CD4-positive, alpha-beta memory T cell (primary cell): ENCODE measurements at regions of chr12 and their contacts with region 1.

Region 1: DNA sequence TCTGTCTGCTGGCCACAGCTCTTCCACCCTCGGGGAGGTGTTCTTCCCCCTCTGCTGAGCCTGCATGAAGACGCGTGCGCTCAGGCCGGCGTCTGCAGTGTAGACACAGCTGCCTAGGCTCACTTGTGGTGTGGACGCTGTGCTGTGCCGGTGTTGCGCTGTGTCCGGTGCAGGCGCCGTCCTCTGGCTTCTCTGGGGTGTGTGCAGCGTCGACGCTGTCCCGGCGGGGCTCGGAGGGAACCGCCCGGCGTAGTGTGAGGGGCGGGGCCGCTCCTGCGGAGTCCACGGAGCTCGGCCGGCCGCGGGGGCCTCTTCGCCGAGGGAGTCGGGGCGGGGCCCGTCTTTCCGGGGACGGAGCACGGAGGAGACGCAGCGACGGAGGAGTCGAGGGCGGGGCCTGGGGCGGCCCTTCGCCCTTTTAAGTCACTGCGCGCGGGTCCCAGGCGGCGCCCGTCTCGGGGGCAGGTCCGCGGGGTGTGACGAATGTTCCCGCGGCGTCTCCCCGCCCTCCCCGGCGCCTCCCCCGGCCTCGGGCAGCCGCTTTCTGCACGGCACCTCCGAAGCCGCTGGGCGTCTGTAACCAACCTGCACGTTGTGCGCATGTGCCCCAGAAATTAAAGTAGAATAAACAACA is 45.2 kb downstream of the NOC4L start:
- DNase-seq: peak; percentile 93 to 95 (median 95)
- H3K4me3 ChIP-seq: peak overlapping the region; percentile 52 to 76
- H3K4me3 Mint-ChIP-seq: peak overlapping the region; percentile 89 to 98 (median 96)
- H3K27ac ChIP-seq: peak overlapping the region; percentile 74
- H3K27ac Mint-ChIP-seq: peak overlapping the region; percentile 88 to 99 (median 97)
- H3K4me1 ChIP-seq: peaks cover 49% of the 10 kb centered on the region
- H3K4me1 Mint-ChIP-seq: peaks cover 21 to 65% (median 39%) of the 10 kb centered on the region in 4 donors
- H3K27me3 ChIP-seq: no peaks in the 10 kb centered on the region
- H3K27me3 Mint-ChIP-seq: no peaks in the 10 kb centered on the region

Region 2: GRCh38 chr12:132083941-132084620 is 105.4 kb before region 1 on chr12:
- CTCF ChIA-PET with region 1: no interaction called
- POLR2A ChIA-PET with region 1: no interaction called
- intact Hi-C with region 1: loop called (anchors 1 kb)
- DNase-seq: peak; percentile 85 to 87 (median 87)
- H3K4me3 ChIP-seq: peak overlapping the region; percentile 42 to 66
- H3K4me3 Mint-ChIP-seq: peak overlapping the region; percentile 82 to 94 (median 91)
- H3K27ac ChIP-seq: peak overlapping the region; percentile 71
- H3K27ac Mint-ChIP-seq: peak overlapping the region; percentile 79 to 94 (median 91)
- H3K4me1 ChIP-seq: peaks cover 19% of the 10 kb centered on the region
- H3K4me1 Mint-ChIP-seq: peaks cover 22 to 33% (median 28%) of the 10 kb centered on the region in 4 donors
- H3K27me3 ChIP-seq: no peaks in the 10 kb centered on the region
- H3K27me3 Mint-ChIP-seq: no peaks in the 10 kb centered on the region

Region 3: GRCh38 chr12:132144115-132144812 is 45.2 kb before region 1 on chr12 and contains the starts of genes DDX51 and NOC4L:
- CTCF ChIA-PET with region 1: interaction called, 4 read pairs
- POLR2A ChIA-PET with region 1: interaction called, 9 read pairs
- intact Hi-C with region 1: loop called (anchors 1 kb)
- DNase-seq: peak; percentile 92 to 97 (median 95)
- H3K4me3 ChIP-seq: peak within 1 kb of the TSS; percentile 58 to 81
- H3K4me3 Mint-ChIP-seq: peak within 1 kb of the TSS; percentile 89 to 99 (median 90)
- H3K27ac ChIP-seq: peak within 1 kb of the TSS; percentile 82
- H3K27ac Mint-ChIP-seq: peak within 1 kb of the TSS; percentile 94 to 99 (median 97)
- H3K4me1 ChIP-seq: peaks cover 27% of the 10 kb centered on the region
- H3K4me1 Mint-ChIP-seq: peaks cover 15 to 42% (median 27%) of the 10 kb centered on the region in 4 donors
- H3K27me3 ChIP-seq: no peaks in the 10 kb centered on the region
- H3K27me3 Mint-ChIP-seq: peaks cover 0 to 2% of the 10 kb centered on the region in 2 donors
- total RNA-seq, gene DDX51: 42.1 to 42.9 TPM
- total RNA-seq, gene NOC4L: 17.0 to 18.5 TPM

Region 4: GRCh38 chr12:132153501-132154340 is 35.8 kb before region 1 on chr12:
- CTCF ChIA-PET with region 1: interaction called, 14 read pairs
- POLR2A ChIA-PET with region 1: interaction called, 9 read pairs
- intact Hi-C with region 1: no loop called
- DNase-seq: peak; percentile 74 to 78 (median 75)
- H3K4me3 ChIP-seq: peak overlapping the region; percentile 23 to 30
- H3K4me3 Mint-ChIP-seq: peak overlapping the region in 3 of 8 donors; percentile 8 to 48 (median 39)
- H3K27ac ChIP-seq: no peak overlapping the region
- H3K27ac Mint-ChIP-seq: peak overlapping the region in 2 of 7 donors; percentile 15 to 64
- H3K4me1 ChIP-seq: peaks cover 10% of the 10 kb centered on the region
- H3K4me1 Mint-ChIP-seq: peaks cover 0 to 5% (median 0%) of the 10 kb centered on the region in 4 donors
- H3K27me3 ChIP-seq: no peaks in the 10 kb centered on the region
- H3K27me3 Mint-ChIP-seq: no peaks in the 10 kb centered on the region

Region 5: DNA sequence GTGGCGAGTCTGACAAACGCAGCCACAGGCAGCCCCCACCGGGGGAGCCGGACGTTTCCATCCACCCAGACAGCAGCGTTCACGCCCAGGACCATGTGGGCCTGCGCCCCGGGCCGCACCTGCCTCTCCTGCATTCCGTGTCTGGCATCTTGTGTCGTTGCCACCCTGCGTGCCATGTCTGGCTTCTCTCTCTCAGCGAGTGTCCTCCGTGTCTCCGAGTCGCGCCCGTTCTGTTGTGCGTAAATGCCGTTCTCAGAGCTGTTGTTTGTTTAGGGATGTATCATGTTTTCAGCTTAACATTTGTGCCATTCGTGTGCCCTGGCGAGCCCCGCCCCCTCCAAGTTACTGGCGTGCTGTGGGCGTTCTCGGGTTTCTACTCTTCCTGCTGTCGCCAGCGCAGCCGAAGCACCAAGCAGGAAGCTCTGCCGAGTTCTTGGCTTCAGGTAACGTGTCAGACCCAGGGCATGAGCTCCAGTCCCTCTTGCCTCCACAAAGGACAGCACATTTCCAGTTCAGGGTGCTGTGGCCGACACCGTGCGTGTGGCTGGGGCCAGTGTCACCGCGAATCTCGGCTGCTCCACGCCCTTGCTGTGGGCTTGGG is 10.6 kb before region 1 on chr12:
- CTCF ChIA-PET with region 1: interaction called, 8 read pairs
- POLR2A ChIA-PET with region 1: interaction called, 37 read pairs
- intact Hi-C with region 1: loop called (anchors 1 kb)
- DNase-seq: peak; percentile 57 to 76 (median 72)
- H3K4me3 ChIP-seq: peak overlapping the region in 1 of 2 donors; percentile 20
- H3K4me3 Mint-ChIP-seq: peak overlapping the region; percentile 45 to 94 (median 88)
- H3K27ac ChIP-seq: peak overlapping the region; percentile 38
- H3K27ac Mint-ChIP-seq: peak overlapping the region; percentile 72 to 97 (median 91)
- H3K4me1 ChIP-seq: peaks cover 24% of the 10 kb centered on the region
- H3K4me1 Mint-ChIP-seq: peaks cover 14 to 32% (median 28%) of the 10 kb centered on the region in 4 donors
- H3K27me3 ChIP-seq: no peaks in the 10 kb centered on the region
- H3K27me3 Mint-ChIP-seq: peaks cover 5% of the 10 kb centered on the region in 2 donors

Region 6: GRCh38 chr12:132205271-132206045 is 16.0 kb after region 1 on chr12:
- CTCF ChIA-PET with region 1: no interaction called
- POLR2A ChIA-PET with region 1: no interaction called
- intact Hi-C with region 1: no loop called
- DNase-seq: no peak
- H3K4me3 ChIP-seq: no peak overlapping the region
- H3K4me3 Mint-ChIP-seq: peak overlapping the region in 1 of 8 donors; percentile 65
- H3K27ac ChIP-seq: no peak overlapping the region
- H3K27ac Mint-ChIP-seq: no peak overlapping the region
- H3K4me1 ChIP-seq: peaks cover 9% of the 10 kb centered on the region
- H3K4me1 Mint-ChIP-seq: peaks cover 0 to 6% (median 0%) of the 10 kb centered on the region in 4 donors
- H3K27me3 ChIP-seq: peaks cover 15% of the 10 kb centered on the region
- H3K27me3 Mint-ChIP-seq: peaks cover 23 to 24% of the 10 kb centered on the region in 2 donors

Region 7: DNA sequence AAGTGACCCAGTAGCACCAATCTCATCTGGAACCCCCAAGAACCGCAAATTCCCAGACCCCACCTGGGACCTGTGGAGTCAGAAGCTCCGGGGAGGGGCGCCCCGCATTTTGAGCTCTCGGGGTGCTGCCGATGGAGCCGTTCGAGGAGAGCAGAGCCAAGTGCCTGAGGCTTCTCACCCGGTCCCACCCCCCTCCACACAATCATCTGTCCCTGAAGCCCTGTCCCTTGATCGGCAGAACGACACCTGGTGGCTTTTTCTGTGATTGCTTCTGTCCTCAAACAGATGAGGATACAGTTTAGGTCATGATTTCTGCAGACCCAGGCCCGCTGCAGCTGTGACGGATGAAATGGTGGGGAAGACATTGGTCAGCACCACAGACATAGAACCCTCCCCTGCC is 29.4 kb after region 1 on chr12:
- CTCF ChIA-PET with region 1: interaction called, 3 read pairs
- POLR2A ChIA-PET with region 1: interaction called, 4 read pairs
- intact Hi-C with region 1: loop called (anchors 1 kb)
- DNase-seq: peak; percentile 47 to 57 (median 53)
- H3K4me3 ChIP-seq: no peak overlapping the region
- H3K4me3 Mint-ChIP-seq: no peak overlapping the region
- H3K27ac ChIP-seq: no peak overlapping the region
- H3K27ac Mint-ChIP-seq: peak overlapping the region in 1 of 7 donors; percentile 35
- H3K4me1 ChIP-seq: peaks cover 14% of the 10 kb centered on the region
- H3K4me1 Mint-ChIP-seq: peaks cover 7 to 16% (median 12%) of the 10 kb centered on the region in 4 donors
- H3K27me3 ChIP-seq: no peaks in the 10 kb centered on the region
- H3K27me3 Mint-ChIP-seq: peaks cover 5 to 9% of the 10 kb centered on the region in 2 donors

Region 8: DNA sequence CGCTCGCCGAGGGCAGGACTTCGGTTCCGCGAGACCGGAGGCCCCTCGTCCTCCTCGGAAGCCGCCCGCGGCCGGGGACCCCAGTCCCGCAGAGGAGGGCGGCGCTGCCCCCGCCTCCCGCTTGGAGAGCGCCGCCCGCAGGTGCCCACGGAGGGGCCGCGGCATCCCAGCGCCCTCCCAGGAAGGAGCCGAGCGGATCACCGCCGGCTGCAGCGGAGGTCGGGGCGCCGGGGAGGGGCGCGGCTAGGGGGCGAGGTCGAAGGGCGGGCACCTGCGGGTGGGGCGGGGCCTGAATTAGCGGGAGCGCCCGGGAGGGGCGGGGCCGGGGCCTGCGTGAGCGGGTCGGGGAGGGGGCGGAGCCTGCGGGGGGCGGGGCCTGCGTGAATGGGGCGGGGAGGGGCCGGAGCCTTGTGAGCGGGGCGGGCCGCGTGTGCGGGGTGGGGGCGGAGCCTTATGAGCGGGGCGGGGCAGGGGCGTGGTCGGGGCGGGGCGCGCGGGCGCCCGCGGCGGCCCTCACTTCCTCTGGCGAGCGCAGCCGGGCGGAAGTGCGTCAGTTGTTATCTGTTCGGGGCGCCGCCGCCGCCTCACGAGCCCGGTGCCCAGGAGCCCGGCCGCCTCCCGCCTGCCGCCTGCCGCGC is 300.2 kb after region 1 on chr12 and contains the start of gene FBRSL1:
- CTCF ChIA-PET with region 1: no interaction called
- POLR2A ChIA-PET with region 1: interaction called, 3 read pairs
- intact Hi-C with region 1: loop called (anchors 1 kb)
- DNase-seq: peak; percentile 89 to 92 (median 90)
- H3K4me3 ChIP-seq: peak within 1 kb of the TSS; percentile 64 to 81
- H3K4me3 Mint-ChIP-seq: peak within 1 kb of the TSS; percentile 86 to 97 (median 93)
- H3K27ac ChIP-seq: peak within 1 kb of the TSS; percentile 83
- H3K27ac Mint-ChIP-seq: peak within 1 kb of the TSS; percentile 92 to 98 (median 97)
- H3K4me1 ChIP-seq: peaks cover 53% of the 10 kb centered on the region
- H3K4me1 Mint-ChIP-seq: peaks cover 38 to 75% (median 53%) of the 10 kb centered on the region in 4 donors
- H3K27me3 ChIP-seq: no peaks in the 10 kb centered on the region
- H3K27me3 Mint-ChIP-seq: no peaks in the 10 kb centered on the region
- total RNA-seq, gene FBRSL1: 97.3 to 101 TPM